H1 (cell line): ENCODE measurements at regions of chr15 and their contacts with region 1.

Region 1: GRCh38 chr15:48285329-48286214 is 45.7 kb upstream of the DUT start:
- DNase-seq: peak in 1 of 2 experiments; percentile 73
- H3K4me3 ChIP-seq: no peak overlapping the region
- H3K27ac ChIP-seq: no peak overlapping the region
- H3K4me1 ChIP-seq: peaks cover 0 to 10% (median 3%) of the 10 kb centered on the region in 4 experiments; a peak in 4 of 7 replicates
- H3K27me3 ChIP-seq: no peaks in the 10 kb centered on the region
- CTCF ChIP-seq: peak in 2 of 3 experiments; percentile 61 to 77; a peak in 3 of 4 replicates
- EP300 ChIP-seq: no peak
- POLR2A ChIP-seq: no peak
- RAD21 ChIP-seq: peak; percentile 73 to 78

Region 2: DNA sequence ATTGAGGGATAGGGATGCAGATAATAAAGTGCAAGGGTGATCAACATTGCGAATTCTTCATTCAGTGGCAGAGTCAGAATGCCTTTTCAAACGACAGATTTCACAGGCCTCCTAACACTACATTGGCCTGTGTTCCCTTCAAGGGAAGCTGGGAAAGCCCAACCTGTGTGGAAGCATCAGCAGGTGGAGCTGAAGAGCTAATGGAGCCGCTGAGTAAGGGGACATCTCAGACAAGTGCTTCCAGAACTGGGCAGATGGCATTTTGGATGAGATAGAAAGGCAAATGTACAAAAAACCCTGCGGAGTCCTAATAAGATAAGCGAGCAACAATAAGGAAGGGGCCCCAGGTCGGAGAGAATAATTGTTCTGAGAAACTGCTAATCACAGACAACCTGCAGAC is 173.3 kb before region 1 on chr15:
- CTCF ChIA-PET with region 1: interaction called, 82 read pairs
- POLR2A ChIA-PET with region 1: no interaction called
- DNase-seq: peak; percentile 29 to 57
- H3K4me3 ChIP-seq: no peak overlapping the region
- H3K27ac ChIP-seq: no peak overlapping the region
- H3K4me1 ChIP-seq: peaks cover 1 to 6% (median 2%) of the 10 kb centered on the region in 4 experiments; a peak in 4 of 7 replicates
- H3K27me3 ChIP-seq: no peaks in the 10 kb centered on the region
- CTCF ChIP-seq: peak; percentile 71 to 84 (median 81)
- EP300 ChIP-seq: no peak
- POLR2A ChIP-seq: no peak
- RAD21 ChIP-seq: peak; percentile 84 to 89

Region 3: DNA sequence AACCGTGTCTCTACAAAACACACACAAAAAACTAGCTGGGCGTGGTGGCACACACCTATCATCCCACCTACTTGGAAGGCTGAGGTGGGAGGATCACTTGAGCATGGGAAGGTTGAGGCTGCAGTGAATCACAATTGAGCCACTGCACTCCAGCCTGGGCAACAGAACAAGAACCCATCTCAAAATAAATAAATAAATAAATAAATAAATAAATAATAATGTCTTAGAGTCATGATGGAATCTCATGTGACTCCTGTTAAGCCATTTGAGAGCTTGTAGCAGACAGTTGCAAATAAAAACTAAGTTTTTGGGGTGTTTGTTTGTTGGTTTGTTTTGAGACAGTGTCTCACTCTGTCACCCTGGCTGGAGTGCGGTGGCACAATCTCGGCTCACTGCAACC is 46.2 kb before region 1 on chr15:
- CTCF ChIA-PET with region 1: interaction called, 11 read pairs
- POLR2A ChIA-PET with region 1: no interaction called
- DNase-seq: no peak
- H3K4me3 ChIP-seq: no peak overlapping the region
- H3K27ac ChIP-seq: no peak overlapping the region
- H3K4me1 ChIP-seq: no peaks in the 10 kb centered on the region
- H3K27me3 ChIP-seq: no peaks in the 10 kb centered on the region
- CTCF ChIP-seq: no peak
- EP300 ChIP-seq: no peak
- POLR2A ChIP-seq: no peak
- RAD21 ChIP-seq: no peak

Region 4: GRCh38 chr15:48250640-48251076 is 34.9 kb before region 1 on chr15:
- CTCF ChIA-PET with region 1: interaction called, 24 read pairs
- POLR2A ChIA-PET with region 1: no interaction called
- DNase-seq: peak; percentile 5 to 47
- H3K4me3 ChIP-seq: no peak overlapping the region
- H3K27ac ChIP-seq: no peak overlapping the region
- H3K4me1 ChIP-seq: peaks cover 0 to 5% (median 0%) of the 10 kb centered on the region in 4 experiments; a peak in 1 of 7 replicates
- H3K27me3 ChIP-seq: no peaks in the 10 kb centered on the region
- CTCF ChIP-seq: peak in 2 of 3 experiments; percentile 62 to 70; a peak in 3 of 4 replicates
- EP300 ChIP-seq: no peak
- POLR2A ChIP-seq: no peak
- RAD21 ChIP-seq: peak; percentile 83 to 84

Region 5: DNA sequence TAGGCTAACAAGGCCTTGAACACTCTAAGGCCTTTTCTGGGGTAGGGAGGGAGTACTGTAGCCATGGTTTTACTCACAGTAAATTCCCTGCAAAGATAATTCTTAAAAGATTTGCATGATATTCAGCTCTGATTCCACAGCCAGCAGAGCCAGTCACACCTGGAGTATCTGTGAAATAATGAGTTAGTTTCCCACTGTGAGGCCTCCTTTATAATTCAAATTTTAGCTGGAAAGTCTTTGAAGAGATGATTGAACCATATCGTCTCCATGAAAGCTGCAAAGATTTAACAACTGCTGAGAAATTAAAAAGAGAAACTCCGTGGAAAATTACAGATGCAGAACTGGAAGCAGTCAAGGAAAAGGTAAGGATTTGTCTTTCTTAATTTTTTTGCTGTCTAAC is 13.3 kb after region 1 on chr15:
- CTCF ChIA-PET with region 1: interaction called, 21 read pairs
- POLR2A ChIA-PET with region 1: no interaction called
- DNase-seq: no peak
- H3K4me3 ChIP-seq: peak overlapping the region in 1 of 4 experiments; percentile 40; a peak in 2 of 8 replicates
- H3K27ac ChIP-seq: no peak overlapping the region
- H3K4me1 ChIP-seq: peaks cover 6 to 21% (median 17%) of the 10 kb centered on the region in 4 experiments; a peak in 6 of 7 replicates
- H3K27me3 ChIP-seq: no peaks in the 10 kb centered on the region
- CTCF ChIP-seq: no peak
- EP300 ChIP-seq: peak in 1 of 2 experiments; percentile 78; a peak in 1 of 3 replicates
- POLR2A ChIP-seq: no peak
- RAD21 ChIP-seq: no peak

Region 6: GRCh38 chr15:48307586-48307985 is 22.0 kb after region 1 on chr15:
- CTCF ChIA-PET with region 1: interaction called, 22 read pairs
- POLR2A ChIA-PET with region 1: no interaction called
- DNase-seq: no peak
- H3K4me3 ChIP-seq: no peak overlapping the region
- H3K27ac ChIP-seq: no peak overlapping the region
- H3K4me1 ChIP-seq: peaks cover 4 to 13% (median 7%) of the 10 kb centered on the region in 4 experiments; a peak in 5 of 7 replicates
- H3K27me3 ChIP-seq: no peaks in the 10 kb centered on the region
- CTCF ChIP-seq: no peak
- EP300 ChIP-seq: no peak
- POLR2A ChIP-seq: no peak
- RAD21 ChIP-seq: no peak

Region 7: DNA sequence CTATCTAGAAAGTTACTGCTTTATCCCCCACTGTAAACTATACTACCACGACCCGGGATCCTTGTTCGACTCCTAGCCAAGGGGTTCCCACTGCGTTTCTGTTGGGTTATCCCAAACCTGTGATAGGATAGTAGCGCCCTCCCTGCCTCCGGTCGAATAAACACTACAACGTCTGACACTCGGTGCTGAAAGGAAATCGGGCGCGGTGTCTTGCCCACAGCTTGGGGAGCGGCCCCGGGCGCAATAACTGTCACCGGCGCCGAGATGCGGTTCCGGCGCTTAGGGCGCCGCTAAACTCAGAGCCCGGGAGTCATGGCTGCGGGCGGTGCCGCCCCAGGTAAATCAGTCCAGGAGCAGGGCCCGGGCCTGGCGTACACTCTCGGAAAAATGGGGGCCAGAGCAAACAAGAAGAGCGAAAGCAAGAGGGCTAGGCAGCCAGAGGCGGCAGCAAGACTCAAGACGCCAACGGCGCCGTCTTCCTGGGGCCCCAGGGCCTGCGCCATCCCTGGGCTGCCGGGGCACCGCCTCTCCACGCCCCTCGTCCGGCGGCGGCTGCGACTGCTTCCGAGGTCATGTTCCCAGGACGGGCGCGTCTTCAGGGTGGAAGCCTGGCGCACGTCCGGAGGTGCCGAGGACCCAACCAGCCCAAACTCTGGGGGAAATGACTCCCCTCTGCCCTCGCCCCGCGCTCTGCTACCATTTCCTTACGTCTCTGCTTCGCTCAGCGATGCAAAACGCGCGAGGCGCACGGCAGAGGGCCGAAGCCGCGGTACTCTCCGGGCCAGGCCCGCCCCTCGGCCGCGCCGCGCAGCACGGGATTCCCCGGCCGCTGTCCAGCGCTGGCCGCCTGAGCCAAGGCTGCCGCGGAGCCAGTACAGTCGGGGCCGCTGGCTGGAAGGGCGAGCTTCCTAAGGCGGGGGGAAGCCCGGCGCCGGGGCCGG is 45.6 kb after region 1 on chr15 and contains the start of gene DUT:
- CTCF ChIA-PET with region 1: interaction called, 59 read pairs
- POLR2A ChIA-PET with region 1: interaction called, 3 read pairs
- DNase-seq: peak in 1 of 2 experiments; percentile 84
- H3K4me3 ChIP-seq: peak within 1 kb of the TSS; percentile 88 to 99 (median 91)
- H3K27ac ChIP-seq: peak within 1 kb of the TSS; percentile 97
- H3K4me1 ChIP-seq: peaks cover 3 to 5% (median 4%) of the 10 kb centered on the region in 4 experiments; a peak in 5 of 7 replicates
- H3K27me3 ChIP-seq: no peaks in the 10 kb centered on the region
- CTCF ChIP-seq: peak in 2 of 3 experiments; percentile 15 to 27; a peak in 2 of 4 replicates
- EP300 ChIP-seq: no peak
- POLR2A ChIP-seq: no peak; a peak in 2 of 3 replicates
- RAD21 ChIP-seq: peak; percentile 35 to 48; a peak in 3 of 4 replicates
- total RNA-seq, gene DUT: 246 and 259 TPM in 2 replicates

Region 8: DNA sequence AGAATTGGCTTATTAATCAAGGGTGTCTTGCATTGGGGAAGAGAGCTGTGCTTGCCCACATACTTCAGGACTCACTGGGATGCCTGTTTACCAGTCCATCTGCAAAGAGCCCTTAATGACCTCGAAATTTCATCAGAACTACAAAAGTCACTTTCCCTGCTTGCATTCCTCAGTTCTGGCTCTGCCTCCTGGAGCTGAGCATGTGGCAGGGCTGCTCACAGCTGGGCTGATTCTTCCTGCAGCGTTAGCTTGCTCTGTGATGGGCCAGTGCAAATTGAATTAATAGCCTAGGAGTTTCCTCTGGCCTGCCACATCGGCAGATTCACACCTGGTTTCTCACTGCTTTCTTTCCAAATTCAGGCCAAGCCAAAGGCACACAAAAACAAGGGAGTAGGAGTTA is 154.5 kb after region 1 on chr15:
- CTCF ChIA-PET with region 1: no interaction called
- POLR2A ChIA-PET with region 1: no interaction called
- DNase-seq: peak in 1 of 2 experiments; percentile 52
- H3K4me3 ChIP-seq: peak overlapping the region in 1 of 4 experiments; percentile 20; a peak in 1 of 8 replicates
- H3K27ac ChIP-seq: peak overlapping the region; percentile 69; the same call in 1 of the 2 replicates
- H3K4me1 ChIP-seq: peaks cover 0 to 13% (median 7%) of the 10 kb centered on the region in 4 experiments; a peak in 3 of 7 replicates
- H3K27me3 ChIP-seq: no peaks in the 10 kb centered on the region
- CTCF ChIP-seq: no peak
- EP300 ChIP-seq: no peak
- POLR2A ChIP-seq: no peak
- RAD21 ChIP-seq: 0 out of 4 replicates have a peak, but pooled peaks of 1 of the 2 experiments have one; percentile 4